ENCODE measurements at regions of chr5 and their contacts with region 1.

Region 1: DNA sequence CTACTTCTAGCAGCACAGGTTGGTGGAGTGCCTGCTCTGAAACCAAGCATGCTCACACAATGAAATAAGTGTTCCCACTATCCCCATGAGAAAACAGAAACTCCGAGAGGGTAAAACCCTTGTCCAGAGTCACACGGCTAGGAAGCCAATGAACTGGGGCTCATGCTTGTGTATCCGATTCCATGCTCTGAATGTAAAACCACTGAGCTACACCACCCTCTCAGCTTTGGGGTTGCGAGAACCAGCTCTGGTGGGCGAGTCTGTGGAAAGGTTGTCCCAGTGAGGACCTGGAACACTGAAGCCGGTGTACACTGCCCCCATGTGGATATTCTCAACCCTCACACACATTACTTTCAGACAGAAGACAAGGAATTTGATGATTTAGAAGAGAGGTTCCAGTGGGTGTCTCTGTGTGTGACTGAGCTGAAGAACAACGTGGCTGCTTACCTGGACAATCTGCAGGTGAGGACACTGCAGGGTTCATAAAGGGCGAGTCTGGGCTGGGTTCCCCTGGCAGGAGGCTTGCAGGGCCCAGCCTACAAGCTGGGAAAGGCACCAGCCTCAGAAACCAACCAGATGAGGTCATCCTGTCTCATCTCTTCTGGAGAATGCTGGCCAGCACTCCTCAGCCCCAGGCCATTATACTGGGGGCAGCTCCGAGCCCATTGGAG is 37.4 kb downstream of the ARHGEF37 start:
- DNase-seq: peak in 2 of 5 donors; percentile 39 to 44
- ATAC-seq: peak; percentile 44 to 65 (median 55)
- H3K4me3 ChIP-seq: no peak overlapping the region
- H3K27ac ChIP-seq: peak overlapping the region in 2 of 12 donors; percentile 9 to 32
- H3K4me1 ChIP-seq: peaks cover 0 to 34% (median 15%) of the 10 kb centered on the region in 12 donors
- H3K27me3 ChIP-seq: no peaks in the 10 kb centered on the region
- CTCF ChIP-seq: peak; percentile 44 to 78 (median 59)
- POLR2A ChIP-seq: no peak

Region 2: DNA sequence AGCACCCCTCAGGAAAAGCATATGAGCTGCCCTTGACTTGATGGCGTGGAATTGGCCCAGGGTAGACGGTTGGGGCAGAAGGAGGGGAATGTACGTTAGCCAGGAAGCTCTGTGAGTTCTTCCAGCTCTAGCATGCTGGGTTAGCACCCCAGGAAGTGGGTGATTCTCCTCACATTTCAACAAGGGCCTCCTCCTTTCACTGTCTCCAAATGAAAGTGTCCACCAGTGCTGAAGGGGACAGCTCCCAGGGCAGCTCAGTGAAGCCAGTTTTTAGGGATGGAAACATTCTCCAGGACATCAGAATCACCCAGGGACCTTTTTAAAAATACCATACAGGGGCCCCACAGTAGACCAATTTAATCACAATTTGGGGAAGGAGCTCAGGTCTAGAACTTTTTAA is 364.2 kb before region 1 on chr5:
- intact Hi-C with region 1: no loop called
- DNase-seq: no peak
- ATAC-seq: peak in 2 of 4 donors; percentile 14 to 16
- H3K4me3 ChIP-seq: no peak overlapping the region
- H3K27ac ChIP-seq: no peak overlapping the region
- H3K4me1 ChIP-seq: no peaks in the 10 kb centered on the region
- H3K27me3 ChIP-seq: no peaks in the 10 kb centered on the region
- CTCF ChIP-seq: no peak
- POLR2A ChIP-seq: no peak

Region 3: DNA sequence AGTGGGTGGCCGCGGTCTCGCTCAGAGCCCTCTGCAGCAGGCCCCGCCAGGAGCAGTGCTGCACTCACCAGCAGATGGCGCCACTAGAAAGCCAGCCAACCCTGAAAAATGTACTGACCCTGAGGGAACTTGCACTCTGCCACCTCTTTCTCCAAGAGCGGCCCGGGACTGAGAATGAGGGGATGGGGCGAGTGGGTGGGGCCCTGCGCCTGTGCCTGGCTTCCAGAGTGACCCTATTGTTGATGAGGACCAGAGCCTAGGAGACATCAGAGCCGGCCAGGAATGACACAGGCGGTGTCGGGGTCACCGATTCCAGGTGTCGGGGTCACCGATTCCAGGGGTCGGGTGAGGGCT is 236.8 kb before region 1 on chr5:
- intact Hi-C with region 1: loop called in 2 of 10 experiments (anchors 5 kb)
- DNase-seq: peak; percentile 83 to 91 (median 85)
- ATAC-seq: peak; percentile 59 to 83 (median 76)
- H3K4me3 ChIP-seq: peak overlapping the region in 4 of 12 donors; percentile 11 to 30 (median 16)
- H3K27ac ChIP-seq: peak overlapping the region; percentile 25 to 98 (median 90)
- H3K4me1 ChIP-seq: peaks cover 8 to 69% (median 41%) of the 10 kb centered on the region in 12 donors
- H3K27me3 ChIP-seq: no peaks in the 10 kb centered on the region
- CTCF ChIP-seq: peak; percentile 92 to 98 (median 96)
- POLR2A ChIP-seq: no peak

Region 4: DNA sequence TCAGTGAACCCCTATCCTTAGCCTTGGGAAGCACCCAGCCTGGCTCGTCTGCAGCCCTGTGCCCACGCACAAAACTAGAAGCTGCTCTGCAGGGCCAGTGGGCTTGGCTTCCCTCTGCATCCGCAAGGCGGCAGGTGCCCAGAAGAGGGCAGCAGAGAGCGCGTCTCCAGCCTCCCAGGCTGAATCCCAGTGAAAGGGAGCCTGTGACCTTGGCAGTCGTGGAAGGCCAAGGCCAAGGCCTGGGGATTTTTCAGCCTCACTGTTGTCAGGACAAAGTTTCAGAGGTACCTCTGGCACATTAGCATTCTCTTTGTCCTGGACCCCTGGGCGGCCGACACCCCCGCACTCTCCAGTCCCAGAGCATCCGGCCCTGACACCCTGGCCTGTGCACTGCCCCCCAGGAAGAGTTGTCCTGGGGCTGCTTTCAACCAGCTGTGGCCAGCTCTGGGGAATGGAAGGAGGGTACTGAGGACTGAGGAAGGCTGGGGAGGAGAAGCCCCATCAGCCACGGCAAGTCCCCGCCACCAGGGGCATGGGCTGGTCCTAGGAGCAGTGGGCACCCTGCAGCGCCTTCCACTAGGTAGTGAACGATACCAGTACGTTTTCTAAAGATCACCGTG is 176.0 kb before region 1 on chr5:
- intact Hi-C with region 1: loop called in 6 of 10 experiments (anchors 5 kb)
- DNase-seq: peak; percentile 81 to 90 (median 85)
- ATAC-seq: peak; percentile 79 to 90 (median 86)
- H3K4me3 ChIP-seq: no peak overlapping the region
- H3K27ac ChIP-seq: peak overlapping the region; percentile 70 to 96 (median 85)
- H3K4me1 ChIP-seq: peaks cover 0 to 42% (median 21%) of the 10 kb centered on the region in 12 donors
- H3K27me3 ChIP-seq: no peaks in the 10 kb centered on the region
- CTCF ChIP-seq: peak; percentile 90 to 96 (median 93)
- POLR2A ChIP-seq: no peak

Region 5: DNA sequence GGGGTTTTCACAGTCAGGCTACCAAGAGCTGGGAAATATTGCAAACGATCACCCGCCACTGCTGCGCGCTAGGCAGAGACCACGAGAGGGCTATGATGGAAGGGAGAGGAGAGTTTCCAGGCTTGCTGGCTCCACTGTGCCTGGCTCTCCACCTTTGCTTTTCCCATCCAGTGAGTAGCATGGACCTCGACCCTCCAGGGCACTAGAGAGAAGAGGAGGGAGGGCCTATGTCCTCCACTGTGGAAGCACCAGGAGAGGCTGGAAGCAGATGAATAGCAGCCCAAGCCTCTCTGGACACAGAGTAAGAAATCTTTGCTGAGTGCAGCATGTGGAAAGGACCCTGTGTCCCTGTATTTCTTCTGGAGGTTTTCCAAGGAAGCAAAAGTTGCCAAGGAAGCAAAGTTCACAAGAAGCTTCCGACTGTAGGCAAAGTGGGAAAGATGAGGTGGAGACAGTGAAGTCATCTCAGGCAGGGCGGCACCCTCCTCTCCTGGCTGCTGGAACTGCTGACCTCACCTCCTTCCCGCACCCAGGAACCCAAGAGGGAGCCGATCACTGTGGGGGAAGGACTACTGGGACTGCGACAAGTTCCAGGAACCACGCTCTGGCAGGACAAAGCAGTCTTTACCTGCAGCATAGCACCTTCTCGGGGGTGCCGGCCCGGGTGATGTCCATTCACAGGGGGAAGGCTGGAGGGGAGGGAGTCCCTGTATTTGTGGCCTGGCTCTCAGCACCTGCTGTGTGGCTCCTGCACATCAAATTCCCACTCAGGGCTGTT is 147.1 kb before region 1 on chr5:
- intact Hi-C with region 1: no loop called
- DNase-seq: no peak
- ATAC-seq: peak; percentile 52 to 82 (median 74)
- H3K4me3 ChIP-seq: no peak overlapping the region
- H3K27ac ChIP-seq: peak overlapping the region in 7 of 12 donors; percentile 1 to 57 (median 29)
- H3K4me1 ChIP-seq: peaks cover 0 to 25% (median 10%) of the 10 kb centered on the region in 12 donors
- H3K27me3 ChIP-seq: no peaks in the 10 kb centered on the region
- CTCF ChIP-seq: no peak
- POLR2A ChIP-seq: no peak

Region 6: GRCh38 chr5:149567226-149567625 is 51.5 kb before region 1 on chr5:
- intact Hi-C with region 1: loop called in 1 of 10 experiments (anchors 5 kb)
- DNase-seq: no peak
- ATAC-seq: no peak
- H3K4me3 ChIP-seq: no peak overlapping the region
- H3K27ac ChIP-seq: no peak overlapping the region
- H3K4me1 ChIP-seq: peaks cover 0 to 26% (median 20%) of the 10 kb centered on the region in 12 donors
- H3K27me3 ChIP-seq: no peaks in the 10 kb centered on the region
- CTCF ChIP-seq: no peak
- POLR2A ChIP-seq: no peak

Region 7: DNA sequence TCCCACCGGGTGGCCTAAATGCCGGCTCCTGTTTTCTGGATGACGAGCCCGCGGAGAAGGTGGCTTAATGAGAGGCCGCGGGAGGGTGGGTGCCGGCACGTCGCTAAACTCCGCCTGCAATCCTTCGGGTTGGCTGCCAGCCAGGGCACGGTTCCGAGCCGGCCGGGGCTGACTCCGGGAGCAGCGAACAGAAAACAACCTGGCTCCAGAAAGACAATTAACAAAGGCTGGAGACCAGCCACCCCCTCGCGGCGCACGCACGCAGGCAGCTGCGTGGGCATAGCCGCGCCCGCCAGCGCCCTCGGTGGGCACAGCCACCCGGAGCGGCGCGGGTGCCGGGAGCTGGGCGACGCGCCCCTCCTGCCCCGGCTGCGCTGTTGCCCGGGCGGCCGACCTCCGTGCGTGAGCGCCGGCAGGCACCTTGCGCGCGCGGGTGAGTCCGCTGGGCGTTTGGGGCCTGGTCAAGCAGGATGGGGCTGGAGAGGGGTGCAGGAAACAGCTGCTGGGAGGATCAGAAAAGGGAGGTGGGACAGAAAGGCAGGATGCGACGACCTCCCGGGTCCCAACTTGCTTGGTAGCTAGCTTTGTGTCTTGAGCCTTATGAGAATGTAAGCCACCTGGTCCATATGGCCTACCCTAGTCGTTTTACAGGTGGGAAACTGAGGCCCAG is 37.4 kb before region 1 on chr5 and contains the start of gene ARHGEF37:
- intact Hi-C with region 1: loop called in 1 of 10 experiments (anchors 5 kb)
- DNase-seq: peak; percentile 91 to 96 (median 94)
- ATAC-seq: peak; percentile 63 to 91 (median 87)
- H3K4me3 ChIP-seq: peak within 1 kb of the TSS; percentile 47 to 79 (median 60)
- H3K27ac ChIP-seq: peak within 1 kb of the TSS; percentile 81 to 97 (median 92)
- H3K4me1 ChIP-seq: peaks cover 3 to 43% (median 37%) of the 10 kb centered on the region in 12 donors
- H3K27me3 ChIP-seq: peaks cover 0 to 9% (median 0%) of the 10 kb centered on the region in 9 donors
- CTCF ChIP-seq: peak in 1 of 12 donors; percentile 27
- POLR2A ChIP-seq: peak in 1 of 2 donors; percentile 77
- total RNA-seq, gene ARHGEF37: 16.0 to 28.5 (median 18.2) TPM

Region 8: GRCh38 chr5:150449517-150450339 is 831.0 kb after region 1 on chr5 and contains the start of gene RPS14:
- intact Hi-C with region 1: no loop called
- DNase-seq: peak; percentile 93 to 96 (median 95)
- ATAC-seq: peak; percentile 96 to 98 (median 97)
- H3K4me3 ChIP-seq: peak within 1 kb of the TSS; percentile 75 to 90 (median 83)
- H3K27ac ChIP-seq: peak within 1 kb of the TSS; percentile 89 to 99 (median 96)
- H3K4me1 ChIP-seq: peaks cover 0 to 37% (median 16%) of the 10 kb centered on the region in 12 donors
- H3K27me3 ChIP-seq: no peaks in the 10 kb centered on the region
- CTCF ChIP-seq: peak; percentile 79 to 99 (median 94)
- POLR2A ChIP-seq: peak in 1 of 2 donors; percentile 84
- total RNA-seq, gene RPS14: 1,031 to 1,428 (median 1,294) TPM